Activated B cell treated with CpG ODN at 0.5 μM for 24 hours (primary cell): ENCODE measurements at regions of chr15 and their contacts with region 1.

Region 1: GRCh38 chr15:60408438-60409105 is 10.8 kb upstream of the ANXA2 start:
- DNase-seq: no peak
- ATAC-seq: peak; percentile 71
- H3K4me3 Mint-ChIP-seq: peak overlapping the region; percentile 5
- H3K27ac Mint-ChIP-seq: peak overlapping the region; percentile 16
- H3K4me1 Mint-ChIP-seq: peaks cover 18% of the 10 kb centered on the region
- H3K27me3 Mint-ChIP-seq: no peaks in the 10 kb centered on the region
- CTCF ChIP-seq: no peak

Region 2: GRCh38 chr15:60496853-60497252 is 88.3 kb after region 1 on chr15:
- CTCF ChIA-PET with region 1: no interaction called
- POLR2A ChIA-PET with region 1: interaction called, 11 read pairs
- intact Hi-C with region 1: no loop called
- DNase-seq: no peak
- ATAC-seq: no peak
- H3K4me3 Mint-ChIP-seq: no peak overlapping the region
- H3K27ac Mint-ChIP-seq: no peak overlapping the region
- H3K4me1 Mint-ChIP-seq: peaks cover 3% of the 10 kb centered on the region
- H3K27me3 Mint-ChIP-seq: no peaks in the 10 kb centered on the region
- CTCF ChIP-seq: no peak